ENCODE measurements at regions of chr9 and their contacts with region 1.

Region 1: GRCh38 chr9:37976714-37977477 is 73.0 kb upstream of the SLC25A51 start:
- DNase-seq: no peak
- H3K4me3 ChIP-seq: no peak overlapping the region
- H3K27ac ChIP-seq: no peak overlapping the region
- H3K4me1 ChIP-seq: no peaks in the 10 kb centered on the region
- H3K27me3 ChIP-seq: no peaks in the 10 kb centered on the region
- CTCF ChIP-seq: no peak

Region 2: GRCh38 chr9:38026021-38026809 is 49.3 kb after region 1 on chr9:
- intact Hi-C with region 1: loop called (anchors 10 kb)
- DNase-seq: no peak
- H3K4me3 ChIP-seq: no peak overlapping the region
- H3K27ac ChIP-seq: peak overlapping the region; percentile 37
- H3K4me1 ChIP-seq: peaks cover 13% of the 10 kb centered on the region
- H3K27me3 ChIP-seq: no peaks in the 10 kb centered on the region
- CTCF ChIP-seq: no peak

Region 3: GRCh38 chr9:38096238-38096805 is 119.4 kb after region 1 on chr9:
- intact Hi-C with region 1: no loop called
- DNase-seq: no peak
- H3K4me3 ChIP-seq: no peak overlapping the region
- H3K27ac ChIP-seq: no peak overlapping the region
- H3K4me1 ChIP-seq: no peaks in the 10 kb centered on the region
- H3K27me3 ChIP-seq: no peaks in the 10 kb centered on the region
- CTCF ChIP-seq: no peak